ENCODE measurements at regions of chr1 and their contacts with region 1.

Region 1: DNA sequence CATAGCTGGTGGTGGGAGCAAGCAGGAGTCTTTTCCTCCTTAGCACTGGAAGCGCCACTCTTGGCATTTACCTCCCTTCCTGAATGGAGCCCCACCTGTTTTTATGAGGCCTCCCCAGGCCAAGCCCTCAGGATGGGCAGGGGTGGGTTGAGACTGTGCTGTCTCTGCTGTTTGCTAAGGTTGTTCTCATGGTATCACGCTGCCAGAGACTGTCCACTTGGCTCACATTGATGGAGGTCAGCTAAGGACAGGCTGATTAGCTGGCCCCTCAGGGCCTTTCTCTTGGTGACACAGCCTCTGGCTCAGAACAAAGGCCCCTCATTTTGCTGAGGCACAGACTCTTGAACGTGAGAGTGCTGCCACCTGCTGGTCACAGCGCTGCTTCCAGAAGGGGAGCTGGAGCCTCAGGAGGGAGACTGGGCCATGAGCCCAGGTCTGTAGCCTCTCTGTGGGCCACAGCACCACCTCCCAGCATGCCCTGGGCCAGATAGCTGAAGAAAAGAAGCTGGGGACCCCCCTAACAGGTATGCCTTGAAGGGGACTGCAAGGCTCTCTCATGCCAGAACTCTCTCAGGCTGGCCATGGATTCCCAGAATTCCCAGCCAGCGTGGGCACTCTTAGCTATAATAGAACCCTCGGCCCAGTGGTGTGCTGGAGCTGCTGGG is 85.6 kb downstream of the CD58 start:
- H3K4me3 ChIP-seq: no peak overlapping the region
- H3K27ac ChIP-seq: no peak overlapping the region
- H3K4me1 ChIP-seq: no peaks in the 10 kb centered on the region
- CTCF ChIP-seq: peak; percentile 80

Region 2: GRCh38 chr1:116151739-116152576 is 333.2 kb before region 1 on chr1:
- CTCF ChIA-PET with region 1: interaction called, 50 read pairs
- POLR2A ChIA-PET with region 1: no interaction called
- H3K4me3 ChIP-seq: peak overlapping the region; percentile 42
- H3K27ac ChIP-seq: no peak overlapping the region; the same call in 1 of the 2 replicates
- H3K4me1 ChIP-seq: no peaks in the 10 kb centered on the region
- CTCF ChIP-seq: peak; percentile 94

Region 3: GRCh38 chr1:116360429-116361173 is 124.6 kb before region 1 on chr1:
- CTCF ChIA-PET with region 1: interaction called, 11 read pairs
- POLR2A ChIA-PET with region 1: no interaction called
- H3K4me3 ChIP-seq: no peak overlapping the region
- H3K27ac ChIP-seq: no peak overlapping the region
- H3K4me1 ChIP-seq: no peaks in the 10 kb centered on the region
- CTCF ChIP-seq: no peak

Region 4: DNA sequence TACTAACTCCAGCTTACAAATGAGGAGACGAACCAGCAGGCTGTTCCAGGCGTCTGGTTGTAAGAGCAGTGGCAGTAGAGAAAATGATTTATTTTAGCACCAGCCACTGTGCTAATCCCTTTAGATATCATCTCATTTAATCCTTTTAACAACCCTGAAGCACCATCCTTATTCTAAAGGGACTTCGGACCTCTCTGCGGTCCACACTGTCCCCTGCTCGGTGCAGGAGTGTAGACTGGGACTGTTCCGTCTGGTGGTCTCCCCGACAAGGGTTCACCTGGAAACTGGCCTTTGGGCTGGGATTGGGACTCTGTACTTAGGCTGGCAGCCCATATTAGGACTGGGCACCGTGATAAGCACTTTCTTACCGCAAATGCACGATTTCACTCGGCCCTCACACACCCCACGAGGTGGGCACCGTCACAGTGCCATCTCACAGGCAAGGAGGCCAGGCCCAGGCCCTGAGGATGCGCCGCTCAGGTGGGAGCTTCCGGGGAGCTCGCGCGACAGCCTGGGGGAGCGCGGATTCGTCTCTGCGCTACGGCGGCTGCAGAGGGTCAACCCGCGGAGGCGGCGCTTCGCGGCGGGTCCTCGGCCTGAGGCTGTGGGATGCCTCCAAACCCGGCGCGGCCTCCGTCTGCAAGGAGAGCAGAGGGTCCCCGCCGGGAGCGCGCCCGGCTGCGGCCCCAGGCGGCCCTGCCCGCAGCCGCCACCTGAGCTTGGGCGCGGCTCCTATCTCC is 66.9 kb before region 1 on chr1:
- CTCF ChIA-PET with region 1: interaction called, 16 read pairs
- POLR2A ChIA-PET with region 1: interaction called, 7 read pairs
- H3K4me3 ChIP-seq: peak overlapping the region; percentile 51
- H3K27ac ChIP-seq: peak overlapping the region; percentile 54; the same call in 1 of the 2 replicates
- H3K4me1 ChIP-seq: no peaks in the 10 kb centered on the region; the same call in 1 of the 2 replicates
- CTCF ChIP-seq: 0 out of 2 replicates have a peak, but pooled peaks have one; percentile 20

Region 5: GRCh38 chr1:116474921-116475849 is 10.0 kb before region 1 on chr1:
- CTCF ChIA-PET with region 1: interaction called, 30 read pairs
- POLR2A ChIA-PET with region 1: interaction called, 3 read pairs
- H3K4me3 ChIP-seq: no peak overlapping the region
- H3K27ac ChIP-seq: no peak overlapping the region
- H3K4me1 ChIP-seq: peaks cover 17% of the 10 kb centered on the region
- CTCF ChIP-seq: no peak